Mucosa of descending colon (tissue), 3 donors: ENCODE measurements at regions of chr17 and their contacts with region 1.

Region 1: DNA sequence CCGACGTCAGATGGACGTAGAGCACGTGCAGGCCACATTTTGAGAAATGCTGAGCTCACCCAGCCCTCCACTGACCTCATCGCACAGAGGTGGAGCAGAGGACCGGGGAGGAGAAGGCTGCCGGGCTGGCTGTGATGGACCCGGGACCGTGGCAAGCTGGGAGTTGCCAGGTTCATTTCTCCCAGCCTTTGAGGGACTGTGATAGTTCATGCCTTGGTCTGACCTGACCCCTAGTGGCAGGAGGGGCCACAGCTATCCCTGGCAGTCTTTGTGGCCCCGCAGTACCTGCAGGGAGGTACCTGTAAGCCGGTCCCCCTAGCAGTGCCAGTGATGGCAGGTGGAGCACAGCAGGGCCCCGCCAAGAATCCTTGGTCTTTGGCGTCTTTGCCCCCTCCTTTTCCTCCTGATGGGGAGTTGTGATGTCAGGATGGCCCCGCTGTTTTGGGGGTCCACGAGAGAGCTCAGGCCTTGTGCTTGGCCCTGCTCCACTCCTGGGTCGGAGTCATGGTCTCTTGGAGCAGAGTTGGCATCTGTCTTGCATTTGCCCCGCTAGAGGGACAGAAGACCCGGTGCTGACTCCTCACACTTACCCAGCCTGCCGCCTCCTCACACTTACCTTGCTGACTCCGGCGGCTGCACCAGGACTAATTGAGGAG is 50.4 kb downstream of the OR1D5 start:
- DNase-seq: peak in 2 of 3 donors; percentile 73 to 78
- ATAC-seq: peak; percentile 78
- H3K4me3 ChIP-seq: no peak overlapping the region
- H3K4me1 ChIP-seq: peaks cover 4% of the 10 kb centered on the region
- CTCF ChIP-seq: peak; percentile 52

Region 2: GRCh38 chr17:2808367-2809335 is 204.4 kb before region 1 on chr17:
- intact Hi-C with region 1: no loop called
- DNase-seq: no peak
- ATAC-seq: no peak
- H3K4me3 ChIP-seq: no peak overlapping the region
- H3K4me1 ChIP-seq: peaks cover 12% of the 10 kb centered on the region
- CTCF ChIP-seq: no peak

Region 3: DNA sequence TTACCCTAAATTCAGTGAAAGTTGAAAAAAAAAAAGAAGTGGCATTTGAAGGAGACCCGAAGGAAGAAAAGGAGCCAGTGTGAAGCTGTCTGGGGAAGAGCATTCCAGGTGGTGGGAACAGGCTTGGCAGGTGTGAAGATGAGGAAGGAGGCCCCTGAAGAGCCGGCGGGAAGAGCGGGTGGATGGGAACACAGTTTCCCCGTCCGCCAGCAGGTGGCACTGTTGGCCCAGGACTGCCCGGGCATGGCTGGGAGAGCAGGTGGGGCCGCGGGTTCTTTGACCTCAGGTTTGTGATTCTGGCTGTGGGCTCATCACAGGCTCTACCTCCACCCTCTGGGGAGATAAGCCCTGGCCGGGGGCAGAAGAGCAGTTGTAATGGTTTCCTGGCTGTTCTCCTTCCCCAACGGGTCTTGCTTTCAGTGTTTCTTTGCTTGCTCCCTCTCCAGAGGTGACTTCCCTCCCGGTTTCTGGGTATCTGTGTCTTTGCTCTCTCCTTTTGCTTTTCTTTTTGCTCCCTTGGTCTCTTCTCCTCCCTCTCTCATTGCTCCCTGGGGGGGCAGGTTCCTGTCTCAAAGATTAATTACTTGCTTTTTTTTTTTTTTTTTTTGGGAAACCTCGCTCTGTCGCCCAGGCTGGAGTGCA is 184.5 kb before region 1 on chr17:
- intact Hi-C with region 1: loop called (anchors 5 to 10 kb)
- DNase-seq: peak; percentile 81 to 88 (median 86)
- ATAC-seq: peak; percentile 98
- H3K4me3 ChIP-seq: no peak overlapping the region
- H3K4me1 ChIP-seq: peaks cover 3% of the 10 kb centered on the region
- CTCF ChIP-seq: peak; percentile 91

Region 4: DNA sequence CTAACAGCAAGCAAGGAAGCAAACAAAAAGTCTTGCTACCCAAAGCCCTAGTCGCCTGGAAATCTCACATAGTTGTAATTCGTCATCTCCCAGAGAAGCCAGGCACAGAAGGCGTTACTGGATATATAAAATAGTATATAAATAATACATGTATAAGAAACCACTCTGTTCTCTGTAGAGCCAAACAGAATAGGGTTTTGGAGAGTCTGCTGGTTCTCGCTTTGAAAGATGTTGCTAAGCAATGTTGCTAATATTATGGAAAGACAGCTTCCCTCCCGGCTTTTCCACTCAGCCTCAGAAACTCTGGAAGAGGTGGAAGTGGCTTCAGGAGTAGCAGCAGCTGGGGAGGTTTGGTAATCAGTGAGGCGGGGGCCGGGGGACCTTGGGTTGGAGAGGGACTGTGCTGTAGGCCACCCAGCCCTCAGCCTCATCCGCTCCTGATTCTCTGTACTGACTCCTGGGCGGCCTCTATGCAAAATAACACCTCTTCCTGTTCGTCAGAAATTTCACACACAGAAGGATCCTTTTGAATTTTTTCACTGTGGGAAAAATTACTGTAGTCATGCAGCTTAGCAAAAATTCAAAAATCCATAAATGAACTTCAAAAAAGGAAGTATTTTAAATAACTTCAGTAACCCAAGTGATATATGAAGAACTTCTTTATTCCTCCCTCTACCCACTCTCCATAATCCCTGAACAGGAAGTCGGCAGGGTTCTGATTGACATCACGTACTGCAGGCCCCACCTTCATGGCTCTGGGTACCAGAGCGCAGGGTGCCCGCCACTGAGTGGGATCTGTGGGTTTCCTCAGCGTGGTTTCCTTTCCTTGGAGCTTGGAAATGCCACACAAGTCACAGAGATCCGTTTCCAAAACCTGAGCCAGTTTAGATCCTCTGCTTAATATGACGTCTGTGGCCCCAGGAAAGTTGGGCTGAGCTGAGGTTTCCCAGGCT is 165.4 kb before region 1 on chr17:
- intact Hi-C with region 1: loop called in 1 of 2 experiments (anchors 5 kb)
- DNase-seq: no peak
- ATAC-seq: no peak
- H3K4me3 ChIP-seq: no peak overlapping the region
- H3K4me1 ChIP-seq: peaks cover 2% of the 10 kb centered on the region
- CTCF ChIP-seq: no peak